H1 (cell line): ENCODE measurements at regions of chr20 and their contacts with region 1.

Region 1: GRCh38 chr20:38434743-38435554 is at the start of gene SNHG17:
- DNase-seq: peak; percentile 84 to 95
- H3K4me3 ChIP-seq: peak within 1 kb of the TSS; percentile 75 to 97 (median 94)
- H3K27ac ChIP-seq: peak within 1 kb of the TSS; percentile 89
- H3K4me1 ChIP-seq: peaks cover 0 to 17% (median 7%) of the 10 kb centered on the region in 4 experiments; a peak in 6 of 7 replicates
- H3K27me3 ChIP-seq: no peaks in the 10 kb centered on the region
- CTCF ChIP-seq: peak; percentile 98 to 100 (median 99)
- EP300 ChIP-seq: peak in 1 of 2 experiments; percentile 82; a peak in 1 of 3 replicates
- POLR2A ChIP-seq: peak; percentile 94 to 98
- RAD21 ChIP-seq: peak; percentile 24 to 42; a peak in 3 of 4 replicates
- total RNA-seq, gene SNHG17: 59.8 and 63.1 TPM in 2 replicates

Region 2: GRCh38 chr20:38446441-38447209 is 11.7 kb after region 1 on chr20:
- CTCF ChIA-PET with region 1: interaction called, 85 read pairs
- POLR2A ChIA-PET with region 1: interaction called, 285 read pairs
- DNase-seq: peak; percentile 80 to 97
- H3K4me3 ChIP-seq: peak overlapping the region; percentile 37 to 87 (median 79)
- H3K27ac ChIP-seq: peak overlapping the region; percentile 67; the same call in 1 of the 2 replicates
- H3K4me1 ChIP-seq: peaks cover 0 to 7% (median 4%) of the 10 kb centered on the region in 4 experiments; a peak in 4 of 7 replicates
- H3K27me3 ChIP-seq: no peaks in the 10 kb centered on the region; a peak in 2 of 7 replicates
- CTCF ChIP-seq: peak; percentile 96 to 97 (median 97)
- EP300 ChIP-seq: peak in 1 of 2 experiments; percentile 47; a peak in 1 of 3 replicates
- POLR2A ChIP-seq: peak; percentile 88 to 92
- RAD21 ChIP-seq: peak; percentile 33 to 46; a peak in 3 of 4 replicates

Region 3: GRCh38 chr20:38466171-38466570 is 31.2 kb after region 1 on chr20:
- CTCF ChIA-PET with region 1: interaction called, 16 read pairs
- POLR2A ChIA-PET with region 1: interaction called, 73 read pairs
- DNase-seq: no peak
- H3K4me3 ChIP-seq: no peak overlapping the region
- H3K27ac ChIP-seq: no peak overlapping the region
- H3K4me1 ChIP-seq: no peaks in the 10 kb centered on the region
- H3K27me3 ChIP-seq: no peaks in the 10 kb centered on the region
- CTCF ChIP-seq: no peak
- EP300 ChIP-seq: no peak
- POLR2A ChIP-seq: no peak
- RAD21 ChIP-seq: no peak

Region 4: GRCh38 chr20:38520261-38520660 is 85.3 kb after region 1 on chr20:
- CTCF ChIA-PET with region 1: no interaction called
- POLR2A ChIA-PET with region 1: no interaction called
- DNase-seq: no peak
- H3K4me3 ChIP-seq: no peak overlapping the region
- H3K27ac ChIP-seq: no peak overlapping the region
- H3K4me1 ChIP-seq: no peaks in the 10 kb centered on the region
- H3K27me3 ChIP-seq: no peaks in the 10 kb centered on the region
- CTCF ChIP-seq: no peak
- EP300 ChIP-seq: no peak
- POLR2A ChIP-seq: no peak
- RAD21 ChIP-seq: no peak

Region 5: DNA sequence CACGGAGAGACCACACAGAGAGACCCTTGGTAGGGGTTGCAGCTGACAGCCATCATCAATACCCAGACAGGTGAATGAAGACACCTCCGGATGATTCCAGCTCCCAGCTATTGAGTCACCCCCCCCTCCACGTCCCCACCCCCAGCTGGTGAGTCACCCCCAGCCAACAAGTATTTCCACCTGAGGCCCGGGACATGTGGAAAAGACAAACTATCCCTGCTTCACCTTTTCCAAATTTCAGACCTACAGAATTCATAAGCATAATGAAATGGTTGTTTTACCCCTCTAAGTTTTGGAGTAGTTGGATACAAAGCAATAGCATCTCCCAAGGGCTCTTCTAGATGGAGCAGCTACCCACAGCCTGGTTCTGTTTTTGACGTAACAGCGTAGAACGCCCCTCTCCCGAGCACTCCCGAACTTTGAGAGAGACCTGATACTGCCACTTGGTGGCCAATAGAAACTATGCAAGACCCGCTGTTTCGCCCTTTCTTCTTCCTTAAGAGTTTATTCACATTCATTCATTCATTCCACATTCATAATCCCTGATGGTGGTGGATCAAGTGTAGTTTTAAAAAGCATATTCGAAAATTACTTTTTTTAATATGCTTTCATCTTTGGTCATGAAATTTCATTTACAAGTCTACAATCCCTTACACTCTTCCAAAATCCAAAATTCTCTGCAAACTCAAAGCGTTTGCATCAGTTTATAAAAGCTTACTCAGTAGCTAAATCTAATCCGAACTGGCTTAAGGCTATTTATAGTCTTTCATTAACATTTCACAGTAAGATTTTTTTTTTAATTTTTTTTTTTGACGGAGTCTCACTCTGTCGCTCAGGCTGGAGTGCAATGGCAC is 355.5 kb after region 1 on chr20:
- CTCF ChIA-PET with region 1: no interaction called
- POLR2A ChIA-PET with region 1: no interaction called
- DNase-seq: no peak
- H3K4me3 ChIP-seq: no peak overlapping the region
- H3K27ac ChIP-seq: no peak overlapping the region
- H3K4me1 ChIP-seq: no peaks in the 10 kb centered on the region; a peak in 1 of 7 replicates
- H3K27me3 ChIP-seq: no peaks in the 10 kb centered on the region
- CTCF ChIP-seq: peak; percentile 36 to 72 (median 70)
- EP300 ChIP-seq: no peak
- POLR2A ChIP-seq: no peak
- RAD21 ChIP-seq: peak; percentile 75 to 80